ENCODE measurements at regions of chr1 and their contacts with region 1.

Region 1: GRCh38 chr1:53811414-53811851 is 26.7 kb downstream of the NDC1 start:
- DNase-seq: no peak
- ATAC-seq: peak; percentile 26; the same call in 1 of the 2 replicates
- H3K4me3 ChIP-seq: no peak overlapping the region
- H3K27ac ChIP-seq: no peak overlapping the region
- H3K4me1 ChIP-seq: no peaks in the 10 kb centered on the region
- H3K27me3 ChIP-seq: no peaks in the 10 kb centered on the region
- CTCF ChIP-seq: peak; percentile 59

Region 2: DNA sequence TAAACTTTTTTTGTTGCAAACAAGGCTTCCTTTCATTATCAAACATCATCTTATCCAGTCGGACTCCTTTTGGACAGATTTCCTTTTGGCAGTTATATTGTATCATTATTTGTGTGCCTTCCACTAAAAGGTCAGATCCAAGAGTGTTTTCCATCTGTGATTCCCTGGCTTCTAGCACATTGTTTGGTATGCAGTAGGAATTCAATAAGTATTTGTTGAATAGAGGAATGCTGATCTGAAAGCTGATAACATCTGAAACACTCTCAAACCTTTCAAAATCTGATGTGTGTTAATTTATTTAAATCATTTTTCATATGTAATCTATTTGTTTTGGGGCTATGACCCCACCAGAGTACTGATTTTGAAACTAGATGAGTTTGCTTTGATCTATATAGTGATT is 12.3 kb before region 1 on chr1:
- CTCF ChIA-PET with region 1: no interaction called
- POLR2A ChIA-PET with region 1: interaction called, 14 read pairs
- in situ Hi-C with region 1: no loop called
- intact Hi-C with region 1: no loop called
- DNase-seq: no peak
- ATAC-seq: no peak
- H3K4me3 ChIP-seq: no peak overlapping the region
- H3K27ac ChIP-seq: no peak overlapping the region
- H3K4me1 ChIP-seq: no peaks in the 10 kb centered on the region
- H3K27me3 ChIP-seq: no peaks in the 10 kb centered on the region
- CTCF ChIP-seq: no peak